Ascending aorta (tissue), 2 donors: ENCODE measurements at regions of chr18 and their contacts with region 1.

Region 1: DNA sequence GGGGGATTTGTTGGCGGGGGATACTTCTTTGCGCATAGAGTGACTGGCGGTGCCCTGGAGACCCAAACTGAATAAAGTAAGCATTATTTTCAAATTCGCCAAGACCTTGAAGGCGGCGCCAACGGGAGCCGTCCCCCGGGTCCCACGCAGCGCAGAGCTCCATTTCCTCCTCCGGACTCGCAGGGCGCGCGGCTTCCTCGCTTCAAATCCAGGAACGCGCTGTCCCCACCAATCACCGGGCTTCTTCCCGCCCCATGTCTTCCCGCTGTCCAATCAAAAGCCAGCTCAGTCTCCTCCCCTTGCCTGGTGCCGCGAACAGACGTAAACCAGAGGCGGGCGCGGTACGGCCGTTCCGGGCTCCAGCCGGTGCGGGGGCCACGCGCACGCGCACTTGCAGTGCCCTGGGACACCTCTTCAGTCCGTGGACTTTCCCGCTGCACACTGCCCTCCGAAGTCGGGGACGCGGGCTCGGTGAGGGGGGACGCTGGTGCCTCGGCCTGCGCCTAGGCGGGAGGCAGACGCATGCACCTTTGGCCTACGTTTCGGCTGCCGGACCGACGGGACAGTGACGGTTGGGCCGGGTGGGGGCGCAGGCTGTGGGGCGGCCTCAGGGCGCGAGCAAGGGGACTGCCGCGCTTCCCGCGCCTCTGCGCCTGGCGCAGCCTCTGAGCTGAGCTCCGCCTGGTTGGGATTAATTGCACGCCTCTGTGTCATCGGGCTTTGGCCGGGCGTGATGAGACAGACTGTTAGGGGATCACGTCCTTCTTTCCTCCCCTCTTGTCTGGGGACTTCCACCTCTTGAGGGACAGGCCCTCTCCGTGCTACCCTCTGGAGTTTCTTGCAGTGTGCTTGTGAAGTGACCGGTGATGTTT is at the start of gene CEP192:
- DNase-seq: peak; percentile 92 to 99
- H3K4me3 ChIP-seq: peak within 1 kb of the TSS; percentile 61 to 87
- H3K27ac ChIP-seq: peak within 1 kb of the TSS; percentile 73 to 80
- H3K4me1 ChIP-seq: peaks cover 0 to 9% of the 10 kb centered on the region in 2 donors
- H3K27me3 ChIP-seq: no peaks in the 10 kb centered on the region
- CTCF ChIP-seq: no peak
- total RNA-seq, gene CEP192: 3.1 TPM

Region 2: GRCh38 chr18:11980555-11981382 is 1010.4 kb before region 1 on chr18:
- intact Hi-C with region 1: loop called (anchors 2 kb)
- DNase-seq: peak; percentile 95 to 99
- H3K4me3 ChIP-seq: peak overlapping the region; percentile 59 to 100
- H3K27ac ChIP-seq: peak overlapping the region; percentile 87 to 92
- H3K4me1 ChIP-seq: peaks cover 0 to 12% of the 10 kb centered on the region in 2 donors
- H3K27me3 ChIP-seq: no peaks in the 10 kb centered on the region
- CTCF ChIP-seq: peak in 1 of 3 experiments; percentile 32

Region 3: GRCh38 chr18:12726774-12727550 is 264.2 kb before region 1 on chr18:
- intact Hi-C with region 1: loop called (anchors 5 kb)
- DNase-seq: peak in 1 of 2 donors; percentile 71
- H3K4me3 ChIP-seq: no peak overlapping the region
- H3K27ac ChIP-seq: no peak overlapping the region
- H3K4me1 ChIP-seq: no peaks in the 10 kb centered on the region
- H3K27me3 ChIP-seq: no peaks in the 10 kb centered on the region
- CTCF ChIP-seq: peak; percentile 86 to 96 (median 89)

Region 4: DNA sequence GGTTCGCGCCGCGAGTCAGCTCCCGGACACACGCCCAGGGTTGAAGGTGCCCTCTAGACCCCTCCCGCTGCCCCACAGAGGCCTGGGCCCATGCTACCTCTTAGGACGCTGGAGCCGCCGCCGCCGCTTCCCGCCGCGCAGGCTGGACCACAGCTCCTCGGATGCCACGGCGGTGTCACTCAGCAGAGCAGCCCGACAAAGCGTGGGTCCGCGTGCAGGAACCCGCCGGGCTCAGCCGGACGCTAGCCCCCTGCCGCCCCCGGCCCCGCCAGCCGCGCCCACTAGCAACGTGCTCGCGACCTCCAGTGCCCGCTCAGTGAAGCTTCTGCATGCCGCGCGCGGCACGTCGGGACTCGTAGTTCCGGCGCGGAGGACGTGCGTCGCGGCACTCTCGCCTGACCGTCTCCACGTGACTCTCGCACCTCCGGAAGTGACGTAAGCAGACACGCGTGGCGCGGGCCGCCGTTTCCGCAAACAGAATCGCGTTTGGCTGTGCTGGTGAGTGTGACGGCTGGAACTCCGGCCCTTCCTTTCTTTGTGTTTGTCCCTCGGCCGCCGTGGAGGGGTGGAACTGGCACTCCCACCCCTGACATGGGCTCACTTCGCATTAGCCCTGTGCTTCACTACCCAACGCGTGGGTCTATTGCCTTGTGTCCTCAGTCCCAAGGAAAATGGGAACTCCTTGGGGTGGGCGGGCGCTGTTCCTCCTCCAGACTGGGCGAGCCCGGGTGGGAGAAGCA is 735.2 kb after region 1 on chr18 and contains the starts of genes FAM210A and RNMT:
- intact Hi-C with region 1: loop called (anchors 1 kb)
- DNase-seq: peak; percentile 87 to 97
- H3K4me3 ChIP-seq: peak within 1 kb of the TSS; percentile 79 to 89
- H3K27ac ChIP-seq: peak within 1 kb of the TSS; percentile 95 to 96
- H3K4me1 ChIP-seq: peaks cover 0 to 13% of the 10 kb centered on the region in 2 donors
- H3K27me3 ChIP-seq: no peaks in the 10 kb centered on the region
- CTCF ChIP-seq: peak in 1 of 3 experiments; percentile 35
- total RNA-seq, gene FAM210A: 2.1 TPM
- total RNA-seq, gene RNMT: 6.4 TPM